A549 (cell line): ENCODE measurements at regions of chr20 and their contacts with region 1.

Region 1: DNA sequence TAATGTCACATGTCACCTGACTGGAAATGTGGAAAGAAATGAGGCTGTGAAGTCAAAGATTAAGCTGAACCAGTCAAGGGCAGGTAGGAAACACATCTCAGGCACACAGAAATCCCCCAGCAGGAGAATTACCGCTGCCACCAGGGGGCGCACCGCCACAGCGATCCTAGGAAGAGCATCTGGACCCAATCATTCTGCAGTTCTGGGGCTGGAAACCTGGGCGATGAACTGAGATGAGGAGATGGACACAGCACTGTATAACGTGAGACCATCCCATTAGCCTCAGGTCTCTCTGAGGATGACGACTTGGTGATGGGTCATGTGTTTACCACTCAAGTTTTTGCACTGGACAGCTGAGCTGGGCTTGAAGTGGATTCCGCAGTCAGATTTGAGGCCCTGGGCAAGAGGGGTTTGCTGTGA is 6.5 kb upstream of the SLC24A3 start:
- DNase-seq: peak; percentile 47 to 62
- ATAC-seq: peak; percentile 84 to 95
- H3K4me3 ChIP-seq: no peak overlapping the region
- H3K27ac ChIP-seq: no peak overlapping the region
- H3K4me1 ChIP-seq: no peaks in the 10 kb centered on the region
- CTCF ChIP-seq: peak; percentile 88
- EP300 ChIP-seq: no peak
- POLR2A ChIP-seq: no peak
- RAD21 ChIP-seq: peak; percentile 73 to 79

Region 2: DNA sequence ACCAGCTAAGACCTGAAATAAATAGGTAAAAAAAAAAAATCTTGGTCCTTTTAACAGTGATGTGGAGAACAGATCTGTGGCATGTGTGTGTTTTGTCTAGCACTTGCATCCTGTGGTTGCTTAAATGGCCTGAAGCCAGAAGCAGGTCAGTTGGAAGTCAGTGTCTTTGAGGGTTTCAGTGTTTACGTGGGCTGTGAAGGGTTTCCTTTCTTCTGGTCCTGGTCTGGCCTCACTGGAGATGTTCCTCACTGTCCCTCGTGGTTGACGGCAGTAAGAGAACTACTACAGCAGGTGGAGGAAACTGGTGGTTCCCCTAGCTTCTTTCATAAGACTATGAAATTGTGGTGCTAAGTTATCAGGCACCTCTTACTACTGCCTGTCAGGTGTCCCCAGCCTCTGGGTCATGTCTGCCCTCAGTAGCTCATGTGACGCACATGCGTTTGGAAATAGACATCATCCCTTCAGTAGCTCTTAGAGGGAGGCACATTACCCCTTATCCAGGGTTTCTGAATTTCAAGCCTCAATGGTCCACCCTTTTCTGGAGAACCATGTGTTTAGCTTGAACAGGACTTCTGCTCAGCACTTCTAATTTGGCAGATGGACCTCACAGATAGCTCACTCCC is 451.8 kb before region 1 on chr20:
- CTCF ChIA-PET with region 1: no interaction called
- POLR2A ChIA-PET with region 1: no interaction called
- DNase-seq: no peak
- ATAC-seq: no peak
- H3K4me3 ChIP-seq: no peak overlapping the region
- H3K27ac ChIP-seq: no peak overlapping the region
- H3K4me1 ChIP-seq: no peaks in the 10 kb centered on the region
- CTCF ChIP-seq: no peak
- EP300 ChIP-seq: no peak
- POLR2A ChIP-seq: no peak
- RAD21 ChIP-seq: no peak

Region 3: GRCh38 chr20:19193349-19193748 is 12.6 kb before region 1 on chr20:
- CTCF ChIA-PET with region 1: interaction called, 26 read pairs
- POLR2A ChIA-PET with region 1: no interaction called
- DNase-seq: no peak
- ATAC-seq: no peak
- H3K4me3 ChIP-seq: no peak overlapping the region
- H3K27ac ChIP-seq: no peak overlapping the region
- H3K4me1 ChIP-seq: no peaks in the 10 kb centered on the region
- CTCF ChIP-seq: no peak
- EP300 ChIP-seq: no peak
- POLR2A ChIP-seq: no peak
- RAD21 ChIP-seq: no peak

Region 4: DNA sequence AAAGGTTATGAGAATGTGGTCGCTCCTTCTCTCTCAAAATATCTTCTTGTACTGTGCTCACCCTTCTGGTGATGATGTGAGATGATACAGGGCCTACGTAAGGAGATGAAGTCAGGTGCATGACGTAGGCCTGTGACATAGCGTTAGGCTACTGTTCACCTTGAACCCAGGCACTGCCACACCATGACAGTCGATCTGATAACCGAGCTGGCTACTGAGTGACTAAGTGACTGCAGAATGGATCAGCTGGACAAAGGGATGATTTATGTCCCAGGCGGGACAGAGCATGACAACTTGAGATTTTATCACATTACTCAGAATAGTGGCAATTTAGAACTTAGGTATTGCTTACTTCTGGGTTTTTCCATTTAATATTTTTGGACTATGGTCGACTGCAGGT is 17.7 kb after region 1 on chr20:
- CTCF ChIA-PET with region 1: interaction called, 58 read pairs
- POLR2A ChIA-PET with region 1: no interaction called
- DNase-seq: no peak
- ATAC-seq: no peak
- H3K4me3 ChIP-seq: no peak overlapping the region
- H3K27ac ChIP-seq: no peak overlapping the region
- H3K4me1 ChIP-seq: no peaks in the 10 kb centered on the region
- CTCF ChIP-seq: no peak
- EP300 ChIP-seq: no peak
- POLR2A ChIP-seq: no peak
- RAD21 ChIP-seq: no peak

Region 5: DNA sequence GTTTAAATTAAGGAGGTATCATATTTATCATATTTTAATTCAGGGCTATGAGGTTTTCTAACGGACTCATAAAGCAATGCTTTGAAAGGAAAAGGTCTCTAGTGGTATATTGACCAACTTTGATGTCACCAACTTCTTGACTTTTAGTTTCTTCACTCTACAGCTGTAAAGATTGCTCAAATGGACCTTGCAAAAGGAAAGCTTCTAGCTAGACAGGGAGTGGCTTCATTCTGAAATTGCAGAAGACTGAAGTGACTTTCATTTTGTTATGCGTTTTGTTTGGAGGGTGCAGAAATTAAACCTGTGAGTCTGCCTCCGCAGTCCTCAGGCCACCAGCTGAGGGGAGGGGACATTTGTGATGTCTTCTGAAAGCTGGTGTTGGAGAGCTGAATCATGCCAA is 102.2 kb after region 1 on chr20:
- CTCF ChIA-PET with region 1: no interaction called
- POLR2A ChIA-PET with region 1: no interaction called
- DNase-seq: no peak
- ATAC-seq: no peak
- H3K4me3 ChIP-seq: no peak overlapping the region
- H3K27ac ChIP-seq: no peak overlapping the region
- H3K4me1 ChIP-seq: no peaks in the 10 kb centered on the region
- CTCF ChIP-seq: no peak
- EP300 ChIP-seq: no peak
- POLR2A ChIP-seq: no peak
- RAD21 ChIP-seq: no peak

Region 6: GRCh38 chr20:19583532-19584175 is 377.7 kb after region 1 on chr20:
- CTCF ChIA-PET with region 1: interaction called, 12 read pairs
- POLR2A ChIA-PET with region 1: no interaction called
- DNase-seq: peak; percentile 61 to 64
- ATAC-seq: peak; percentile 65 to 91; a peak in 5 of 6 replicates
- H3K4me3 ChIP-seq: no peak overlapping the region
- H3K27ac ChIP-seq: no peak overlapping the region
- H3K4me1 ChIP-seq: no peaks in the 10 kb centered on the region
- CTCF ChIP-seq: peak; percentile 38
- EP300 ChIP-seq: no peak
- POLR2A ChIP-seq: no peak
- RAD21 ChIP-seq: peak; percentile 44 to 78; a peak in 4 of 5 replicates